Upper lobe of right lung (tissue), 1 donor: ENCODE measurements at regions of chr22 and their contacts with region 1.

Region 1: DNA sequence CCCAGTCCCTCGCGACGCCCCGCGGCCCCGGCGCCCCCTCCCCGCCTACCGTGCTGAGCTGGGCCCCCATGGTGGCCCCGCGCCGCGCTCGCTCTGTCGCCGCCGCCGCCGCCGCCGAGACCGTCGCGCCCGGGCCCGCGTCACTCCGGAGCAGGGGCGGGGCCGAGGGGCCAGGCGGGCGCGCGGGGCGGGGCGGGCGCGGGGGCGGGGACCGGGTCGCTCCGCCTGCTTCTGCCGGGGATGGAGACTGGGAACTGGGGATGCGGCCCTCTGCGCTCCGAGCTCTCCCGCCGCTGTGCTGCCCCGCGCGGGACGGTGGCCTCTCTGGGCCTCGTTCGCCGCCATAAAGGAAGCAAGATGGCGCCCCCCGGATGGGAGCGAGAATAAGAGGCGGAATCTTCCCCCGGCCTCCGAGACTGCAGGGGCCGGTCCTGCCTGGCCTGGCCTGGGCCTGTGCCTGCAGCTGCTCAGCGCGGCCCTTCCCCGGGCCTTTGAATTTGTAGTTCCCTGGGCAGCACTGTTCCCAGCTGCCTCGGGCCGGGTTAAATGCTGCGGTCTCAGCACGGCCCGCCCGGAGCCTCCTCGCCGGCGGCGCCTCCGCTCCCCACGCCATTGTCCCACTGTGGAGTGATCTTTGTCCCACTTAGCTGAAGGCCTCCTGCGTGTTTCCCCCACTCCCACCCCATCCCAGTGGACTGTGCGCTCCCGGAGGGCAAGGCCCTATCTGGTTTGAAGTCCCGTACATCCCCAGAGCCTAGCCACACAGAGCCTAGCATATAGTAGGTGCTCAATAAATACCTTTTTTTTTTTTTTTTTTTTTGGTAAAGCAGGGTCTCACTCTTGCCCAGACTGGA is at the start of gene CYB5R3:
- DNase-seq: peak; percentile 93
- ATAC-seq: peak; percentile 87
- H3K4me3 ChIP-seq: peak within 1 kb of the TSS; percentile 93
- H3K27ac ChIP-seq: peak within 1 kb of the TSS; percentile 92
- H3K4me1 ChIP-seq: peaks cover 41% of the 10 kb centered on the region
- H3K27me3 ChIP-seq: no peaks in the 10 kb centered on the region
- CTCF ChIP-seq: no peak
- total RNA-seq, gene CYB5R3: 251 TPM

Region 2: GRCh38 chr22:42717197-42717928 is 67.9 kb after region 1 on chr22:
- intact Hi-C with region 1: loop called (anchors 10 kb)
- DNase-seq: no peak
- ATAC-seq: no peak
- H3K4me3 ChIP-seq: no peak overlapping the region
- H3K27ac ChIP-seq: no peak overlapping the region
- H3K4me1 ChIP-seq: peaks cover 8% of the 10 kb centered on the region
- H3K27me3 ChIP-seq: peaks cover 14% of the 10 kb centered on the region
- CTCF ChIP-seq: no peak

Region 3: GRCh38 chr22:42743501-42743991 is 94.1 kb after region 1 on chr22:
- intact Hi-C with region 1: no loop called
- DNase-seq: no peak
- ATAC-seq: peak; percentile 68
- H3K4me3 ChIP-seq: no peak overlapping the region
- H3K27ac ChIP-seq: peak overlapping the region; percentile 83
- H3K4me1 ChIP-seq: peaks cover 34% of the 10 kb centered on the region
- H3K27me3 ChIP-seq: no peaks in the 10 kb centered on the region
- CTCF ChIP-seq: peak; percentile 7

Region 4: DNA sequence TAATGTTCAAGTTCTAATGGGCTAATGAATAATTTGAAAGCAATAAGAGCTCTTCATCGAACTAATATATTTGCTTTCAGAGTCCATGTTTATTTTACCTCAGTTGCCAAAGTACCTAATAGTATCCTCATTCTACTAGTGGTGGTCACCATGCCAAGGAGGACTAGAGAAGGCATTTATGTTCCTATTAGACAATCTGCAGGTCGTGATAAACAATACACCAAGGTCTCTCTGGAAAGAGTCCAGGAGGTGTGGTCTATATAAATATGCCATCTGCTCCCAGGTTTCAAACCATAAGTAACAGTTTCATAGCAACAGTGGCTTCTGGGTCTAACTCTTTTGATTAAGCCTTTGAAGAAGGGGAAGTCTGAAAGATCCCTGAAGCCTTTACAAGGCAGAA is 164.7 kb after region 1 on chr22:
- intact Hi-C with region 1: loop called (anchors 10 kb)
- DNase-seq: no peak
- ATAC-seq: no peak
- H3K4me3 ChIP-seq: no peak overlapping the region
- H3K27ac ChIP-seq: no peak overlapping the region
- H3K4me1 ChIP-seq: peaks cover 8% of the 10 kb centered on the region
- H3K27me3 ChIP-seq: no peaks in the 10 kb centered on the region
- CTCF ChIP-seq: no peak